ENCODE measurements at regions of chr4 and their contacts with region 1.

Region 1: GRCh38 chr4:2436301-2436700 is 17.5 kb downstream of the CFAP99 start:
- DNase-seq: no peak
- H3K4me3 ChIP-seq: no peak overlapping the region
- H3K27ac ChIP-seq: no peak overlapping the region
- H3K4me1 ChIP-seq: peaks cover 0 to 7% (median 0%) of the 10 kb centered on the region in 4 experiments; a peak in 4 of 7 replicates
- H3K27me3 ChIP-seq: no peaks in the 10 kb centered on the region
- CTCF ChIP-seq: no peak
- EP300 ChIP-seq: no peak
- POLR2A ChIP-seq: no peak
- RAD21 ChIP-seq: peak; percentile 11 to 17; a peak in 1 of 4 replicates

Region 2: GRCh38 chr4:2262143-2262943 is 174.0 kb before region 1 on chr4:
- CTCF ChIA-PET with region 1: no interaction called
- POLR2A ChIA-PET with region 1: no interaction called
- DNase-seq: peak; percentile 97 to 98
- H3K4me3 ChIP-seq: peak overlapping the region; percentile 40 to 89 (median 56)
- H3K27ac ChIP-seq: 0 out of 2 replicates have a peak overlapping the region, but pooled peaks have one; percentile 7
- H3K4me1 ChIP-seq: peaks cover 0 to 9% (median 4%) of the 10 kb centered on the region in 4 experiments; a peak in 5 of 7 replicates
- H3K27me3 ChIP-seq: no peaks in the 10 kb centered on the region
- CTCF ChIP-seq: 0 out of 4 replicates have a peak, but pooled peaks of 1 of the 3 experiments have one; percentile 2
- EP300 ChIP-seq: no peak
- POLR2A ChIP-seq: no peak
- RAD21 ChIP-seq: no peak

Region 3: DNA sequence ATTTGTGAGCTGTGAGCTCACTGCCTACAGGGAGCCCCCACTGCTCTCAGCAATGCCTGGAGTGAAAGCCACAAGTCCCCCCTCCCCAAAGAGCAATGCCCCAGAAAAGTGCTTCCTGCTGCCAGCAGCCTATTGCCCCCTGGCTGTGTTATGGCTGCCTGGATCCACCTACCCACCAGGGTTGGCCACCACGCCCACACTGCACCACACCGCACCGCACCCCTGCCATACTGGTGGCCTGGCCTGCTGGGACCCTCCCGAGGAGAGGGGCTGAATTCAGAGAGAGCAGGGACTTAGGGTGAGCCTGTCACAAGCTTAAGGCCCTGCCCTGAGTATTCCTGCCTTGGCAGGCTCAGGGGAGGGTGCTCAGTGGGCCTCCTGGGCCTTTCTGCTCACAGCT is 13.2 kb before region 1 on chr4:
- CTCF ChIA-PET with region 1: interaction called, 40 read pairs
- POLR2A ChIA-PET with region 1: no interaction called
- DNase-seq: no peak
- H3K4me3 ChIP-seq: no peak overlapping the region
- H3K27ac ChIP-seq: no peak overlapping the region
- H3K4me1 ChIP-seq: peaks cover 0 to 17% (median 9%) of the 10 kb centered on the region in 4 experiments; a peak in 6 of 7 replicates
- H3K27me3 ChIP-seq: peaks cover 12 to 27% (median 23%) of the 10 kb centered on the region in 4 experiments
- CTCF ChIP-seq: no peak
- EP300 ChIP-seq: no peak
- POLR2A ChIP-seq: no peak
- RAD21 ChIP-seq: no peak

Region 4: DNA sequence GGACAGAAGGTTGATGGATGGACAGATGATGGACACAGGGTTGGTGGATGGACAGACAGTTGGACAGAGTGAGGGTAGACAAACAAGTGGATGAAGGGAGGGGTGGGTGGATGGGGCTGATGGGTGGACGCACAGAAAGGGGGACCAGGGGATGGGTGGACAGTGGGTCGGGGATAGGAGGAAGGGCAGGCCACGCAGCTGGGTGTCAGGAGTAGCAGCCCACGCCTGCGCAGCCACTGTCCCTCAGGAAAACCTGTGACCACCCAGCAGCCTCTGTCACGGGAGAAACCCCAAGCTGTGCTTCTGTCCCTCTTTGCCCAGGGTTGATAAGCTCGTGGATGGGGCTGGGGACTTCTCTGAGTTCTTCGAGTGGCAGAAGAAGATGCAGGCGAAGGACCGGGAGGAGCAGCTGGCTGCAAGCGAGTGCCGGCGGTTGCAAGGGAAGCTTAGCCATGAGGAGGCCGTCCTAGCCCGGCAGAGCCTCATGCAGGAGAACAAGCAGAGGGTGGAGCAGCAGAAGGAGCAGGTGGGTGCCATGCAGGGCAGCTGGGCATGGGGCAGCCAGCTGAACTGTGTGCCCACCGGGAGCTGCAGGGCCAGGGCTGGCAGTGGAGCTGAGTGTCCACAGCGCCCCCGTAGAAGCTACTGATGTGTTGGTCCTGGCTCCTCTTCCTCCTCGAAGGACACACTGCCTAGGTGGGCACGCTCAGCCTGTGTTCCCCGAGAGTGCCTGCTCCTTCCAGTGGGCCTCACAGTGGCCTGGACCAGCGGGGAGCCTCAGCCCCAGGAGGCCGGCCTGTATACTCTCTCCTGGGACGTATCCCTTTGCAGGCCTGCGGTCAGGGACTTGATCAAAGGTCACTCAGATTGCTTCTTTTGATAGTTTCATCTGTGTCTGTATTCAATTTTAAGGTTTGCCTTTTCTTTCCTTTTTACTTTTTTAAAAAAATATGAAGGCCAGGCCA is 15.8 kb after region 1 on chr4:
- CTCF ChIA-PET with region 1: interaction called, 53 read pairs
- POLR2A ChIA-PET with region 1: no interaction called
- DNase-seq: no peak
- H3K4me3 ChIP-seq: no peak overlapping the region
- H3K27ac ChIP-seq: no peak overlapping the region
- H3K4me1 ChIP-seq: no peaks in the 10 kb centered on the region
- H3K27me3 ChIP-seq: no peaks in the 10 kb centered on the region
- CTCF ChIP-seq: no peak
- EP300 ChIP-seq: no peak
- POLR2A ChIP-seq: no peak
- RAD21 ChIP-seq: no peak

Region 5: DNA sequence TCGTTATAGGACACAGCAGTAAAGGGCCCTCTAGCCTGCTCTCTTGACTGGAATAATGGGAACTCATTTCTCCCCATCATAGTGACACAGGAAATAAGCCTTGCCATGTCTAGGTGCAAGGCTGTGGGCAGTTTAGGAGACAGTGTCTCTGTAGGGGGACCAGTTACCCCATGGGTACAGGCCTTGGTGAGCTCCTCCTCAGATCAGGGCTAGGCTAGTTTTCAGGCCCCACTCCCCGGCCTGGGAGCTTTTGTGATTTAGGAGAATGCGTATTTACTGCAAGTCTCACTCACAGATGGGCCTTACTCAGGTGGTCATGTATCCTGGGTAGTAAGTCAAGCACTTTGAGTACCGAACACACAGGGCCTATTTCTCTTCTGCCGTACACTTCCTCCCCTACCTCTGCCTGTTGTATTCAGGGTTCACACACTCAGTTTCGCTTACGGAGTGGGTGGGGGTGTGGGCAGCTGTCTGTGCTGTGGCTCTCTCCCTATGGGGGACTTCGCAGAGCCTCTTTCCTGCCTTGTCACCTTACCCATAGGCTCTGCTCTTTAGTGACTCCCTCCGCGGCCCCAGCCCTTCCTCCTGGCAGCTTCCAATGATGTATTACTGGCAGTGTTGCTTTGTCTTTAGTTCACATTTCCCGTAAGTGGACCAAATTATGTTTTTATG is 134.4 kb after region 1 on chr4:
- CTCF ChIA-PET with region 1: no interaction called
- POLR2A ChIA-PET with region 1: no interaction called
- DNase-seq: no peak
- H3K4me3 ChIP-seq: no peak overlapping the region
- H3K27ac ChIP-seq: no peak overlapping the region
- H3K4me1 ChIP-seq: peaks cover 0 to 10% (median 5%) of the 10 kb centered on the region in 4 experiments; a peak in 6 of 7 replicates
- H3K27me3 ChIP-seq: no peaks in the 10 kb centered on the region
- CTCF ChIP-seq: no peak
- EP300 ChIP-seq: no peak
- POLR2A ChIP-seq: no peak
- RAD21 ChIP-seq: no peak